Heart right ventricle (tissue), 16 donors: ENCODE measurements at regions of chr12 and their contacts with region 1.

Region 1: GRCh38 chr12:17763366-17763765 is 326.6 kb downstream of the RERGL start:
- DNase-seq: no peak
- ATAC-seq: no peak
- H3K4me3 ChIP-seq: no peak overlapping the region
- H3K27ac ChIP-seq: no peak overlapping the region
- H3K4me1 ChIP-seq: no peaks in the 10 kb centered on the region
- H3K27me3 ChIP-seq: no peaks in the 10 kb centered on the region
- CTCF ChIP-seq: no peak

Region 2: GRCh38 chr12:17640615-17641014 is 122.8 kb before region 1 on chr12:
- intact Hi-C with region 1: no loop called
- DNase-seq: no peak
- ATAC-seq: no peak
- H3K4me3 ChIP-seq: no peak overlapping the region
- H3K27ac ChIP-seq: no peak overlapping the region
- H3K4me1 ChIP-seq: no peaks in the 10 kb centered on the region
- H3K27me3 ChIP-seq: peaks cover 0 to 10% (median 0%) of the 10 kb centered on the region in 7 donors
- CTCF ChIP-seq: no peak

Region 3: DNA sequence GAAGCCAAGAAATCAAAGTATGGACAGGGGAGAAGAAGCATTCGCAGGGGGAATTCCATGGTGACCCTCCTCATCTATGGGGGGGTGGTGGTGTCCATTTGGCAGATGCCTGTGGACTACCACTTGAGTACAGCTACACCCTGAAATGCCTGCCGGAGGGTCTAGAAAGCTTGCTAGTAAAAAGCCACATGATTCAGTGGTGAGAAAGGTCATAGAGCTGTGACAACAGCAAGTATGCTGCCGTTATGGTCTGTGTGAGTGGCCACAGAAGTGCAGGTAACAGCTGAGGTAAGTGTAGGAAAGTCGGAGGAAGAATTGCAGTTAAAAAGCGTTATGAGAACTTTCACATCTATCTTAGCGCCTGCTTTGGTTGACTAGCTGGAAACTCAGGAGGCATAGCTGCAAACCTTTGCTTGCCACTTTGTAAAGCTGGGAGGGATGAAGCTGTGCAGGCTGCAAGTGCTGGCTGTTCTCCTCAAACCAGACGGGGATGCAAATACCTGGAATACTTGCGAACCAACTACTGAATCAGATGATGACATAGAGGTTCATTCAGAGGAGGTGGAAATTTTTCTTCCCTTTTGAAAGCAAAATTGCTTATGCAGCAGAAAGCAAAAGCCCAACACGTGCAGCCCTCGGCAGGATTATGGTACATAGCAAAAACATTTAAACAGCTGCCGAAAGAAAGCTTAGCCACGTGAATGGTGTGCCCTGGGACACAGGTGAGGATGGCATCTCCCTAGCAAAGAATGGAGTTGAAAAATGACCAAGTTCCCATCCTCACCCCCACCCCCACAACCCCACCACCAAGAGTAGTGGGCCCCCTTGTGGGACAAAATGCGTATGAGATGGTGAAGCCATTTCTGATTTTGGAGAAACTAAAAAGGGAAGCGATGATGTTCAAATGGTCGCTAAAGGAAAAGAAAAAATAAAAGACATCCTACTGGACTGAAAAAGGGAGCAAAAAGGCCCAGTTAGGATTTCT is 39.6 kb after region 1 on chr12:
- intact Hi-C with region 1: no loop called
- DNase-seq: no peak
- ATAC-seq: no peak
- H3K4me3 ChIP-seq: no peak overlapping the region
- H3K27ac ChIP-seq: no peak overlapping the region
- H3K4me1 ChIP-seq: no peaks in the 10 kb centered on the region
- H3K27me3 ChIP-seq: no peaks in the 10 kb centered on the region
- CTCF ChIP-seq: no peak

Region 4: GRCh38 chr12:17841496-17841895 is 78.1 kb after region 1 on chr12:
- intact Hi-C with region 1: loop called in 1 of 10 experiments (anchors 5 kb)
- DNase-seq: no peak
- ATAC-seq: no peak
- H3K4me3 ChIP-seq: no peak overlapping the region
- H3K27ac ChIP-seq: no peak overlapping the region
- H3K4me1 ChIP-seq: no peaks in the 10 kb centered on the region
- H3K27me3 ChIP-seq: no peaks in the 10 kb centered on the region
- CTCF ChIP-seq: no peak

Region 5: DNA sequence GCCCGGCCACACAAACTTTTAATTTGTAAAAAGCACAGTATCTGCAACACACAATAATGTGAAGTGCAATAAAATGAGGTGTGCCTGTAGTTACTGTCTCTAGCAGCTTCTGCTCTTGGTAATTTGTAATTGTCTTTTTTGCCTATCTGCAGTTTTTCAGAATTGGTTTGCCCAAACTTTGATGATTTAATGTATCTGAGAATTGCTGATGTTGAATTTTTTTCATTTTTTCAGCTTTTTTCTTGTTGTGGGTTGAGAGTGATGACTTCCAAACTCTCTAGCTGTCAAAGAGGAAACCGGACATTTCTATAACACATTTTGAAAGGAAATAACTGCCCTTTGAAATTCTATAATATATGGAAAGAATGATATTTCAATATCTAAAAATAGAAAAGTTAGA is 89.7 kb after region 1 on chr12:
- intact Hi-C with region 1: loop called (anchors 1 to 5 kb)
- DNase-seq: no peak
- ATAC-seq: no peak
- H3K4me3 ChIP-seq: no peak overlapping the region
- H3K27ac ChIP-seq: no peak overlapping the region
- H3K4me1 ChIP-seq: no peaks in the 10 kb centered on the region
- H3K27me3 ChIP-seq: no peaks in the 10 kb centered on the region
- CTCF ChIP-seq: no peak